Esophagus squamous epithelium (tissue), 5 donors: ENCODE measurements at regions of chr7 and their contacts with region 1.

Region 1: DNA sequence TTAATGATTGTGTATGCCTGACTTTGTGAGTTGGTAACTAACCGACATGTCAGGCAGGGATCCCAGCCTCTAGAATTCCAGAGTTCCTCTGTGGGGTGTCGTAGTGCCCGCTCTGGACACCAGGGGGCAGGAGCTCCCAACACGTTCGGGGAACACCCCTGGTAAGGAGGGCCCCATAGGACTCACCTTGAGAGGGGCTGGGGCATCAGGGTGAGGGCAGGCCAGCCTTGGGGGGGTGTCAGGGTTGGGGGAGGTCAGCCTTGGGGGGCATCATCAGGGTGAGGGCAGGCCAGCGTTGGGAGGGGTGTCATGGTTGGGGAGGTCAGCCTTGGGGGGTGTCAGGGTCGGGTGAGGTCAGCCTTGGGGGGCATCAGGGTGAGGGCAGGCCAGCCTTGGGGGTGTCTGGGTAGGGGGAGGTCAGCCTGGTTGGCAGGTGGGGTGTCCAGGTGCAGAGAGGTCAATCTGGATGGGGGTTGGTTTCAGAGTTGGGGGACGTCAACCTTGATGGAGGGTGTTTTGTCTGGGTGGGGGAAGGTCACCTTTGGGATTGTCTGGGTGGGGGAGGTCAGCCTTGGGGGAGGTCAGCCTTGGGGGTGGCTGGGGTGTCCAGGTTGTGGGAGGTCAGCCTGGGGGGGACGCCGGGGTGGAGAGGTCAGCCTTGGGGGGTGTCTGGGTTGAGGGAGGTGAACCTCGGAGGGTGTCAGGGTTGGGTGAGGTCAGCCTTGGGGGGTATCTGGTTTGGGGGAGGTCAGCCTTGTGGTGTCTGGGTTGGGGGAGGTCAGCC is 45.6 kb upstream of the SUN1 start:
- DNase-seq: no peak
- H3K4me3 ChIP-seq: no peak overlapping the region
- H3K27ac ChIP-seq: peak overlapping the region in 1 of 4 donors; percentile 2
- H3K4me1 ChIP-seq: peaks cover 0 to 6% (median 0%) of the 10 kb centered on the region in 3 donors
- H3K27me3 ChIP-seq: no peaks in the 10 kb centered on the region
- CTCF ChIP-seq: peak; percentile 54 to 96 (median 92)
- POLR2A ChIP-seq: no peak

Region 2: GRCh38 chr7:873367-874002 is 86.8 kb after region 1 on chr7:
- intact Hi-C with region 1: loop called (anchors 5 kb)
- DNase-seq: no peak
- H3K4me3 ChIP-seq: no peak overlapping the region
- H3K27ac ChIP-seq: peak overlapping the region; percentile 39 to 90 (median 68)
- H3K4me1 ChIP-seq: peaks cover 13 to 44% (median 22%) of the 10 kb centered on the region in 3 donors
- H3K27me3 ChIP-seq: no peaks in the 10 kb centered on the region
- CTCF ChIP-seq: peak; percentile 82 to 99 (median 97)
- POLR2A ChIP-seq: no peak